ENCODE measurements at regions of chr19 and their contacts with region 1.

Region 1: GRCh38 chr19:20039203-20039723 is at the start of gene ZNF682:
- DNase-seq: peak; percentile 98
- ATAC-seq: peak; percentile 100
- H3K4me3 Mint-ChIP-seq: peak within 1 kb of the TSS; percentile 94
- H3K27ac Mint-ChIP-seq: peak within 1 kb of the TSS; percentile 94
- H3K4me1 Mint-ChIP-seq: peaks cover 16% of the 10 kb centered on the region
- H3K27me3 Mint-ChIP-seq: peaks cover 5% of the 10 kb centered on the region
- total RNA-seq, gene ZNF682: 6.0 to 7.5 TPM

Region 2: GRCh38 chr19:19776041-19777008 is 262.9 kb before region 1 on chr19:
- CTCF ChIA-PET with region 1: no interaction called
- POLR2A ChIA-PET with region 1: no interaction called
- intact Hi-C with region 1: loop called in 1 of 2 experiments (anchors 1 kb)
- DNase-seq: peak; percentile 96
- ATAC-seq: peak; percentile 99
- H3K4me3 Mint-ChIP-seq: peak overlapping the region; percentile 98
- H3K27ac Mint-ChIP-seq: peak overlapping the region; percentile 85
- H3K4me1 Mint-ChIP-seq: peaks cover 37% of the 10 kb centered on the region
- H3K27me3 Mint-ChIP-seq: no peaks in the 10 kb centered on the region

Region 3: GRCh38 chr19:19997656-19998268 is 41.5 kb before region 1 on chr19:
- CTCF ChIA-PET with region 1: no interaction called
- POLR2A ChIA-PET with region 1: no interaction called
- intact Hi-C with region 1: no loop called
- DNase-seq: peak; percentile 72
- ATAC-seq: peak; percentile 33
- H3K4me3 Mint-ChIP-seq: no peak overlapping the region
- H3K27ac Mint-ChIP-seq: no peak overlapping the region
- H3K4me1 Mint-ChIP-seq: no peaks in the 10 kb centered on the region
- H3K27me3 Mint-ChIP-seq: no peaks in the 10 kb centered on the region

Region 4: DNA sequence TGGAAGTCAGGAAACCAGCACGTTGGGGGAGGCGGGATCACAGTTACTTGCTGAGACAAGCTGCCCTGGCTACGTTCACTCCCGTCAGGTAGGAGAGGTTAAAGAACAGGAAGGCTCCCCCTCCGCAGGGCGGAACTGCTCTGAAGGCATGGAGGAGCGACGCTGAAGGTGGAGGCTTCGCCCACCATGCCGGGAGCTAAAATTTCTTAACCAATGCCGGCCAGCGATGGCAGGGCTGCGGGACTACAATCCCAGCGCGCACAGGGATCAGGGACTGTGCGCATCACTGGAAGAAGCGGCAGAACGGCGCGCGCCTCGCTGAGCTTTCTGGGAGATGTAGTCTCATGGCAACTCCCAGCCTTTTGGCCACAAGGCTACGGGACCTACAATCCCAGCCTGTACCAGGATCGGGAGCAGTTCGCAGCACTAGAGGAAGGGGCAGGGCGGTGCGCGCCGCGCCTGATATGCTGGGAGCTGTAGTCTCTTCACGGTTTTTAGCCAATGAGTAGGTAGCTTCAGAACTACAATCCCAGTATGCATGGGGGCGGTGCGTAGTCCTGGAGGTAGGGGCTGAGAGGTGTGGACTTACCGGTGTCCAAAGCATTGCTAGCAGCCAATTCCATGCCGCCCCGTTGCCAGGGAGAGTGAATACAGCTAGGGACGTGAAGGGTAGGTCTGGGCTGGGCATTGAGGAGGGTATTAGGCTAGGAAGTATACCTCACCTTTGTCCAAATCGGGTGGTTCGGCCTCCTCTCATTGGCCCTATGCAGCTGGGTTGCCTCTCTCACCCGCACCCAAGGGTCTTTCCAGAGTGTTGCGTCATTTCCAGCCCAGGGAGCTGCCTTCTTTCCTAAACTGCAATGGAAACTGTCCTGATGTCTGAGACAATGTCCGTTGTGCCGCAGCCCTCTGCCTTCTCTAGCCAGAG is 12.8 kb after region 1 on chr19:
- CTCF ChIA-PET with region 1: interaction called, 5 read pairs
- POLR2A ChIA-PET with region 1: interaction called, 16 read pairs
- intact Hi-C with region 1: loop called in 1 of 2 experiments (anchors 1 kb)
- DNase-seq: peak; percentile 86
- ATAC-seq: peak; percentile 92
- H3K4me3 Mint-ChIP-seq: peak overlapping the region; percentile 89
- H3K27ac Mint-ChIP-seq: peak overlapping the region; percentile 92
- H3K4me1 Mint-ChIP-seq: peaks cover 13% of the 10 kb centered on the region
- H3K27me3 Mint-ChIP-seq: peaks cover 3% of the 10 kb centered on the region

Region 5: DNA sequence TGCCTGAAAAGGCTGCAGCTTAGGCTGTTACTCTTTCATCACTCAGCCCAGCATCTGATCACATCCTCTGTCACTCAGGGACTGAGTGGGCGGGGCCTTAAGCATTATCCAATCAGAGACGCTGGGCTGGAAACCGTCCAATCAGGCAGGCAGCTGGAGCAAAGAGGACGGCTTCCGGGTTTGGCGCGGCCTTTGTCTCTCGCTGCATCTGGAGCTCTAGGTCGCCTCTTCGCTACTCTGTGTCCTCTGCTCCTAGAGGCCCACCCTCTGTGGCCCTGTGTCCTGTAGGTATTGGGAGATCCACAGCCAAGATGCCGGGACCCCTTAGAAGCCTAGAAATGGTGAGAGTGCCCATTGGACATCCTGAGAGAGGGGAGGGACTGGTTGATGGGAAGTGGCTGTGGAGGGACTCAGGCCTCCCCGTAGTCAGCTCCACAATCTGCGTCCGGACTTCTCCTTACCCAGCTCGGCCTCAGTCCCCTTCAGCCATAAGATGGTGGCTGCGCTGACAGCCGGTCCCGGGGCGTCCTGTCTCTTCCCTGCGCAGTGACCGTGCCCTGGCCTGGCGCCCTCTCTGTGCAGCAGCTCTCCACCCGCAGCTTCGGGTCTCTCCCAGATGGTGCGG is 127.9 kb after region 1 on chr19 and contains the start of gene ZNF486:
- CTCF ChIA-PET with region 1: no interaction called
- POLR2A ChIA-PET with region 1: interaction called, 3 read pairs
- intact Hi-C with region 1: loop called in 1 of 2 experiments (anchors 1 kb)
- DNase-seq: peak; percentile 97
- ATAC-seq: peak; percentile 99
- H3K4me3 Mint-ChIP-seq: peak within 1 kb of the TSS; percentile 99
- H3K27ac Mint-ChIP-seq: peak within 1 kb of the TSS; percentile 97
- H3K4me1 Mint-ChIP-seq: peaks cover 34% of the 10 kb centered on the region
- H3K27me3 Mint-ChIP-seq: no peaks in the 10 kb centered on the region
- total RNA-seq, gene ZNF486: 16.1 to 18.1 TPM

Region 6: GRCh38 chr19:20999731-21000352 is 960.6 kb after region 1 on chr19:
- CTCF ChIA-PET with region 1: no interaction called
- POLR2A ChIA-PET with region 1: no interaction called
- intact Hi-C with region 1: loop called in 1 of 2 experiments (anchors 1 kb)
- DNase-seq: peak; percentile 95
- ATAC-seq: peak; percentile 100
- H3K4me3 Mint-ChIP-seq: peak overlapping the region; percentile 89
- H3K27ac Mint-ChIP-seq: peak overlapping the region; percentile 91
- H3K4me1 Mint-ChIP-seq: peaks cover 9% of the 10 kb centered on the region
- H3K27me3 Mint-ChIP-seq: no peaks in the 10 kb centered on the region

Measured in activated CD4-positive, alpha-beta T cell treated with anti-CD3 and anti-CD28 coated beads for 36 hours (primary cell).